Left lung (tissue), 14 donors: ENCODE measurements at regions of chr18 and their contacts with region 1.

Region 1: GRCh38 chr18:54679318-54680149 is 88.5 kb downstream of the DYNAP start:
- DNase-seq: peak in 2 of 4 donors; percentile 67 to 80
- ATAC-seq: peak; percentile 95
- H3K4me3 ChIP-seq: no peak overlapping the region
- H3K27ac ChIP-seq: no peak overlapping the region
- H3K4me1 ChIP-seq: no peaks in the 10 kb centered on the region
- H3K27me3 ChIP-seq: no peaks in the 10 kb centered on the region
- CTCF ChIP-seq: peak in 1 of 2 donors; percentile 48

Region 2: GRCh38 chr18:54444319-54444914 is 235.1 kb before region 1 on chr18:
- intact Hi-C with region 1: loop called in 1 of 2 experiments (anchors 10 kb)
- DNase-seq: peak in 2 of 4 donors; percentile 53 to 77
- ATAC-seq: peak; percentile 82
- H3K4me3 ChIP-seq: no peak overlapping the region
- H3K27ac ChIP-seq: no peak overlapping the region
- H3K4me1 ChIP-seq: no peaks in the 10 kb centered on the region
- H3K27me3 ChIP-seq: no peaks in the 10 kb centered on the region
- CTCF ChIP-seq: peak; percentile 47 to 55

Region 3: GRCh38 chr18:54607215-54607934 is 72.2 kb before region 1 on chr18:
- intact Hi-C with region 1: no loop called
- DNase-seq: no peak
- ATAC-seq: peak; percentile 76
- H3K4me3 ChIP-seq: no peak overlapping the region
- H3K27ac ChIP-seq: peak overlapping the region; percentile 73 to 74
- H3K4me1 ChIP-seq: peaks cover 0 to 4% of the 10 kb centered on the region in 2 donors
- H3K27me3 ChIP-seq: no peaks in the 10 kb centered on the region
- CTCF ChIP-seq: no peak

Region 4: GRCh38 chr18:54742659-54743604 is 63.4 kb after region 1 on chr18:
- intact Hi-C with region 1: no loop called
- DNase-seq: peak in 3 of 4 donors; percentile 54 to 96 (median 91)
- ATAC-seq: peak; percentile 76
- H3K4me3 ChIP-seq: no peak overlapping the region
- H3K27ac ChIP-seq: no peak overlapping the region
- H3K4me1 ChIP-seq: no peaks in the 10 kb centered on the region
- H3K27me3 ChIP-seq: no peaks in the 10 kb centered on the region
- CTCF ChIP-seq: no peak

Region 5: DNA sequence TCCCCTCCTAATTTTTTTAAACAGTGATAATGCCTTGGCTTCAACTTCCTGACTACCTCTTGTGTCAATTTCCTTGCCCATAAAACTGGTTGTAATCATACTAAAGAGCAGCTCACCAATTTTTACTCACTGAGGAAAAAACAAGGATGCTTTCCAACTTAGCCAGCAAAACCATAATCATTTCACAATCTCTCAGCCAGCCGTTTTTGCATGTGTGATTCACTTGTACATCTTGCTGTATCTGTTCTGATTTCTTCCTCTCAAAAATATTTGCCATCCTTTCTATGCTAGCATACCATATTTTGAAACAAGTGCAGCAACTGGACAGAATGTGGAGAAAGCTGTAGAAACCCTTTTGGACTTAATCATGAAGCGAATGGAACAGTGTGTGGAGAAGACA is 209.4 kb after region 1 on chr18:
- intact Hi-C with region 1: no loop called
- DNase-seq: no peak
- ATAC-seq: no peak
- H3K4me3 ChIP-seq: no peak overlapping the region
- H3K27ac ChIP-seq: no peak overlapping the region
- H3K4me1 ChIP-seq: no peaks in the 10 kb centered on the region
- H3K27me3 ChIP-seq: no peaks in the 10 kb centered on the region
- CTCF ChIP-seq: no peak

Region 6: GRCh38 chr18:54983041-54983686 is 303.6 kb after region 1 on chr18:
- intact Hi-C with region 1: loop called (anchors 5 to 10 kb)
- DNase-seq: peak in 2 of 4 donors; percentile 46 to 68
- ATAC-seq: peak; percentile 85
- H3K4me3 ChIP-seq: no peak overlapping the region
- H3K27ac ChIP-seq: no peak overlapping the region
- H3K4me1 ChIP-seq: peaks cover 0 to 4% of the 10 kb centered on the region in 2 donors
- H3K27me3 ChIP-seq: no peaks in the 10 kb centered on the region
- CTCF ChIP-seq: peak; percentile 65 to 73

Region 7: DNA sequence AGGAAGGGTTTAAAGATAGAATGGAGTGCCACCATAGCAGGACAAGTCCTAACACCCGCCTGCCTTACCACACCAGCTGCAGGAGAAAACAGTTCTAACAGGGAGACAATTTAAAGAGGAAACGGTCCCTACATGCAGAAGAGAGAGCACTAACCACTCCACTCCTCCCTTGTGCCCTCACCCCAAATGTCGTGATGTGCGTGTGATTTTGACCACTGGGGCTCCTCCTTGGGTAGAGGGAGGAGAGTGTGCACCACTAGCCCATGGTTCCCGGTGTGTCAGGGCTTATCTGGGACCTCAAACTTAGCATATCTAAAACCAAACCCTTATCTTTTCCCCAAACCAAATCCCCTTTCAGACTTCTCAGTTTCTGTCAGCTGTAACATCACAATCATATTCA is 385.2 kb after region 1 on chr18:
- intact Hi-C with region 1: no loop called
- DNase-seq: no peak
- ATAC-seq: no peak
- H3K4me3 ChIP-seq: no peak overlapping the region
- H3K27ac ChIP-seq: no peak overlapping the region
- H3K4me1 ChIP-seq: no peaks in the 10 kb centered on the region
- H3K27me3 ChIP-seq: no peaks in the 10 kb centered on the region
- CTCF ChIP-seq: no peak